H1 (cell line): ENCODE measurements at regions of chr6 and their contacts with region 1.

Region 1: GRCh38 chr6:43951063-43951755 is 176.0 kb downstream of the MRPL14 start:
- DNase-seq: peak; percentile 56 to 85
- H3K4me3 ChIP-seq: no peak overlapping the region
- H3K27ac ChIP-seq: no peak overlapping the region
- H3K4me1 ChIP-seq: peaks cover 0 to 5% (median 1%) of the 10 kb centered on the region in 4 experiments; a peak in 3 of 7 replicates
- H3K27me3 ChIP-seq: no peaks in the 10 kb centered on the region
- CTCF ChIP-seq: peak; percentile 96 to 98 (median 98)
- EP300 ChIP-seq: no peak
- POLR2A ChIP-seq: no peak
- RAD21 ChIP-seq: peak; percentile 98

Region 2: DNA sequence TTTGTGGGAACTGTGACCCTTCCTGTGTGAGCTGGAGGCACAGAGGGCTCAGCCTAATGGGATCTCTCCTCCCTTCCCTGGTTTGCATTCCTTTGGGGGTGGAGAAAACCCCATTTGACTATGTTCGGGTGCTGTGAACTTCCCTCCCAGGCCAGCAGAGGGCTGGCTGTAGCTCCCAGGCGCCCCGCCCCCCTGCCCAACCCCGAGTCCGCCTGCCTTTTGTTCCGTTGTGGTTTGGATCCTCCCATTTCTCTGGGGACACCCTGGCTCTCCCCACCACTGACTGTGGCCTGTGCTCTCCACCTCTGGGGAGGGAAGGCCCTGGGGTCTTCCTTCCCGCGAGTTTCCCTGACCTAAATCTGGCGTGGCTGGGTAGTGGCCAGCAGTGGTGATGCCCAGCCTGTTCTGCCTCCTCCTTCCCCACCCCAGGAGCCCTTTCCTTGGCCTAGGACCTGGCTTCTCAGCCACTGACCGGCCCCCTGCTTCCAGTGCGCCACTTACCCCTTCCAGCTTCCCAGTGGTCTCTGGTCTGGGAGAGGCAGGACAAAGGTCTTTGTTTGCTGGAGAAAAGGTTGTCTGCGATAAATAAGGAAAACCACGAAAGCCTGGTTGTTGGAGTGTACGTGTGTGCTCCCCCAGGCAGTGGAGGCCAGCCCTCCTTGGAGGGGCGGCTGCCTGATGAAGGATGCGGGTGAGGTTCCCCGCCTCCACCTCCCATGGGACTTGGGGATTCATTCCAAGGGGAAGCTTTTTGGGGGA is 176.3 kb before region 1 on chr6:
- CTCF ChIA-PET with region 1: interaction called, 75 read pairs
- POLR2A ChIA-PET with region 1: interaction called, 17 read pairs
- DNase-seq: peak in 1 of 2 experiments; percentile 85
- H3K4me3 ChIP-seq: peak overlapping the region in 2 of 4 experiments; percentile 12 to 87; a peak in 4 of 8 replicates
- H3K27ac ChIP-seq: peak overlapping the region; percentile 37; the same call in 1 of the 2 replicates
- H3K4me1 ChIP-seq: peaks cover 0 to 24% (median 18%) of the 10 kb centered on the region in 4 experiments; a peak in 6 of 7 replicates
- H3K27me3 ChIP-seq: no peaks in the 10 kb centered on the region
- CTCF ChIP-seq: peak in 2 of 3 experiments; percentile 84 to 86; a peak in 3 of 4 replicates
- EP300 ChIP-seq: no peak
- POLR2A ChIP-seq: no peak
- RAD21 ChIP-seq: peak; percentile 65 to 69

Region 3: GRCh38 chr6:43847741-43848605 is 103.2 kb before region 1 on chr6:
- CTCF ChIA-PET with region 1: interaction called, 20 read pairs
- POLR2A ChIA-PET with region 1: no interaction called
- DNase-seq: no peak
- H3K4me3 ChIP-seq: no peak overlapping the region
- H3K27ac ChIP-seq: no peak overlapping the region
- H3K4me1 ChIP-seq: peaks cover 0 to 3% (median 1%) of the 10 kb centered on the region in 4 experiments; a peak in 2 of 7 replicates
- H3K27me3 ChIP-seq: no peaks in the 10 kb centered on the region
- CTCF ChIP-seq: no peak
- EP300 ChIP-seq: no peak
- POLR2A ChIP-seq: no peak
- RAD21 ChIP-seq: no peak

Region 4: GRCh38 chr6:43916924-43917877 is 34.0 kb before region 1 on chr6:
- CTCF ChIA-PET with region 1: interaction called, 42 read pairs
- POLR2A ChIA-PET with region 1: no interaction called
- DNase-seq: no peak
- H3K4me3 ChIP-seq: no peak overlapping the region
- H3K27ac ChIP-seq: no peak overlapping the region
- H3K4me1 ChIP-seq: peaks cover 0 to 3% (median 2%) of the 10 kb centered on the region in 4 experiments; a peak in 3 of 7 replicates
- H3K27me3 ChIP-seq: no peaks in the 10 kb centered on the region
- CTCF ChIP-seq: no peak
- EP300 ChIP-seq: no peak
- POLR2A ChIP-seq: no peak
- RAD21 ChIP-seq: no peak

Region 5: DNA sequence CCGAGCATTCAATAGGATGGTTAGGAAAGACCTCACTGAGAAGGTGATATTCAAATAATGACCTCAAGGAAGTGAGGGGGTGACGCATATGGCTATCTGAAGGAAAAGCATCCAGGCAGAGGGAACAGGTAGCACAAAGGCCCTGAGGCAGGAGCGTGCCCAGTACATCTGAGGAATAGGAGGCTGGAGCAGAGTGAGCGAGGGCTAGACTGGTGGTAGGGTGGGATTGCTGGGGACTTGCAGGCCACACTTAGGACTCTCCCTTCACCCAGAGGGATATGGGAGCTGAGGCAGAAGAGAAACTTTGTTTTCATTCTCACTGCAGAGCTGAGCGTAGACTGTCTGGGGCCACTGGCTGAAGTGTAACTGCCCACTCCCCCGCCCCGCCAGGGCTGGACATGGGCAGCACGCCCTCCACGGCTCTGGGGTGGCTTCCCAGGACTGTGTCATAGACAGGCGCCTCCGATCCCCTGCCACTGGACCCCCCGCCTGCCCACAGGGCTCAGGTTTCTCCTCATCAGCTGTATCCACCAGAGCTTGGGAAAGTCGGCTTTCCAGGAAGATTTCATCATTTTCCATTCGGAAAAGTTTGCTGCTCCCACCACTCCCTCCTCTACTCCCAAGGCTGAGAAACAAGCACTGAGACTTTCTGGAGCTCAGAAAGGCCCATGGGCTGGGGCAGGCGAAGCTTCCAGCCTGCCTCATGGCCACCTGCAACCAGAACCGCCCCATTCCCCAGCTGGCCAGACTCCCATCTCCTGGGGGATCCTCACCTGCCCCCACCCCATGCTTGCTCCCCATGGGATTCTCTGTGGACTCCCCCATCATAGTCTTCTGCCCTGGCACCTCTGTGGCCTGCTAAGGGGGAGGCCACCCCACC is 33.5 kb after region 1 on chr6:
- CTCF ChIA-PET with region 1: interaction called, 12 read pairs
- POLR2A ChIA-PET with region 1: no interaction called
- DNase-seq: no peak
- H3K4me3 ChIP-seq: no peak overlapping the region
- H3K27ac ChIP-seq: no peak overlapping the region
- H3K4me1 ChIP-seq: peaks cover 0 to 4% (median 2%) of the 10 kb centered on the region in 4 experiments; a peak in 2 of 7 replicates
- H3K27me3 ChIP-seq: no peaks in the 10 kb centered on the region
- CTCF ChIP-seq: no peak
- EP300 ChIP-seq: no peak
- POLR2A ChIP-seq: no peak
- RAD21 ChIP-seq: no peak

Region 6: DNA sequence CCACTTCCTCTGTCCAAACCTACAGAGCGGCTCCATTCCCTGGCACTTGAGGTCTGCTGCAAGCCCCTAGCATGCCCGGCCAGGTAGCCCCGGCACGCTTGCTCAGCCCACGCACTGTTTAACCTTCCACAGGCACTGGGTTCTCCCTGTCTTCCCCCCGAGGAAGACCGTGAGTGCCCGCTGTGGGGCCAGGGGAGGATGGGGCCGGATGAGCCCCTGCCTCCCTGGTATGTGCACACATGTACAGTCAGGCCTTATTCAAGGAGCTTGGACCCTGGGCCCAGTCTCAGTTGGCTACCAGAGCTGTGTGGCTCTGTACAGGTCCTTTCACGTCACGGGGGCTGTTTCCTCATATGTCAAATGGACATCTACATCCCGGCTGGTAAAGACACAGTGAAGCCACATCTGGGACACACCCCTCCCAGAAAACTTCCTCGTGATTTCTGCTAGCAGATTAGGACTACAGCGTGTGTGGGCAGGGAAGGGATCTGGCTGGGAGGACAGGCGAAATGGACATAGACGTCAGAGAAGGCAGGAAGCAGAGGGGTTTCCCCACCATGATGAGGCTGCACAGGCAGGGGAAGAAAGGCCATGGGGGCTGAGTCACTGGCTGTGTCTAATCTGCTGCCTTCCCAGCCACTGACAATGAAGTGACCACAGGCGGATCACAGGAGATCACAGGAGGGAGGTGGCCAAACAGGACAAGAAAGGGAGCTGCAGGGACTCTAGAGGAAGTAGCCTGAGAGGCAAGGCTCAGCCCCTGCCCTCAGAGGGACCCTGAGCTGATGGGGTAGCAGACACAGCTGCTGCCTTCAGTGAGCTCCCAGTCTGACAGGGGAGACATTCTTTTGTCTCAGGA is 113.1 kb after region 1 on chr6:
- CTCF ChIA-PET with region 1: interaction called, 115 read pairs
- POLR2A ChIA-PET with region 1: no interaction called
- DNase-seq: no peak
- H3K4me3 ChIP-seq: no peak overlapping the region
- H3K27ac ChIP-seq: no peak overlapping the region
- H3K4me1 ChIP-seq: peaks cover 0 to 16% (median 9%) of the 10 kb centered on the region in 4 experiments; a peak in 5 of 7 replicates
- H3K27me3 ChIP-seq: no peaks in the 10 kb centered on the region; a peak in 1 of 7 replicates
- CTCF ChIP-seq: no peak
- EP300 ChIP-seq: no peak
- POLR2A ChIP-seq: no peak
- RAD21 ChIP-seq: no peak